ENCODE measurements at regions of chr7 and their contacts with region 1.

Region 1: DNA sequence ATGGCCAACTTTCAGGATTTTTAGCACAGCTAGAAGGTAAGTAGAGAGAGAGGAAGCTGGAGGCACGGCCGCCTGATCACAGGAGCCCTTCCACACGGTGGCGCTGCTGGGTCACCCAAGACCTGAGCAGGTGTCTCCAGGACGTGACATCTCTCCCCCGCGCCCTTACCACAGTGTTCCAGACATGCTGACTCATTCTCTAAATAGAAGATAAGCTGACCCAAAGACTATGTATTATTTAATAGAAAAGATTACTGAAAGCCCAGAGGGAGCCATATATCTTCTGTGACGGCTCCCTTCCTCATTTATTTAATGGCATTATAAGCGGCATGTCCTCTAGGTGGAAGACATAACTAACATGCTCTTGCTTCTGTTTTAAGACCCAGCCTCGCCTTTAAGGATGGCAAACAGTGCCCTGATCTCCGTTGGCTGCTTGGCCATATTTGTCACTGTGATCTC is 26.0 kb upstream of the MALSU1 start:
- DNase-seq: peak; percentile 85 to 98 (median 90)
- ATAC-seq: peak; percentile 96
- H3K4me3 ChIP-seq: no peak overlapping the region
- H3K27ac ChIP-seq: peak overlapping the region; percentile 38; the same call in 1 of the 3 replicates
- H3K4me1 ChIP-seq: peaks cover 0 to 7% of the 10 kb centered on the region in 2 experiments; a peak in 3 of 5 replicates
- H3K27me3 ChIP-seq: peaks cover 0 to 10% of the 10 kb centered on the region in 2 experiments; a peak in 1 of 5 replicates
- CTCF ChIP-seq: peak; percentile 85 to 93 (median 93)
- EP300 ChIP-seq: peak; percentile 68; the same call in 1 of the 2 replicates
- POLR2A ChIP-seq: no peak
- RAD21 ChIP-seq: peak; percentile 79 to 89

Region 2: DNA sequence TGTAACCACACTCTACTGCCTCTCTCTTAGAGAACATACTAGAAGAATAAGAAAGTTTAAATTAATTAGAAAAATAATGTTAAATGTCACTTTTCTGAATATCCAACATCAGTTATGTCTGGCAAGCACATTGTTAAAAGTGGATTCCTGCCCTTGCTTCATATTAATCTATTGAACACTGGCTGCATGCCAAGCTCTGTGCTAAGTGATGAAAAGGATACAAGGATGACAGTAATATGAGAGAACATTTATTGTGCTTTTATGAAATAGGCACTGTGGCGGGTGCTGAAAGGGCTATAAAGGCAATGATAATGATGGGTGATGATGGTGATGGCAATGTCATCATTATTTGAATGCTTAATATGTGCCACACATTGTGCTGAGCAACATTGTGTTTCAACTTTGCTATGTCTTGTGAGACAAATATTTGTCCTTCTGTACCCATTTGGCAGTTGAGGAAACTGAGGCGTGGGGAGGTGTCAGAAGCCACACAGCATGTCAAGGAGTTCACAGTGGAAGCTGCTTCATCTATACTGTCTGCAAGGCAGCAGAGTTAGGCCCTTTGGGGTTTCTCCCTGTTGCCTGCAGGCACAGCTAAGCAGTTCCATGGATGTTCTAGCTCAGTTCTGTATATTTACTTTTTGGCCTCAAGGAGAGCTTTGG is 852.1 kb before region 1 on chr7:
- CTCF ChIA-PET with region 1: no interaction called
- POLR2A ChIA-PET with region 1: no interaction called
- in situ Hi-C with region 1: no loop called
- intact Hi-C with region 1: no loop called
- DNase-seq: no peak
- ATAC-seq: no peak
- H3K4me3 ChIP-seq: no peak overlapping the region
- H3K27ac ChIP-seq: no peak overlapping the region
- H3K4me1 ChIP-seq: no peaks in the 10 kb centered on the region; a peak in 1 of 5 replicates
- H3K27me3 ChIP-seq: no peaks in the 10 kb centered on the region
- CTCF ChIP-seq: no peak
- EP300 ChIP-seq: no peak
- POLR2A ChIP-seq: no peak
- RAD21 ChIP-seq: no peak

Region 3: DNA sequence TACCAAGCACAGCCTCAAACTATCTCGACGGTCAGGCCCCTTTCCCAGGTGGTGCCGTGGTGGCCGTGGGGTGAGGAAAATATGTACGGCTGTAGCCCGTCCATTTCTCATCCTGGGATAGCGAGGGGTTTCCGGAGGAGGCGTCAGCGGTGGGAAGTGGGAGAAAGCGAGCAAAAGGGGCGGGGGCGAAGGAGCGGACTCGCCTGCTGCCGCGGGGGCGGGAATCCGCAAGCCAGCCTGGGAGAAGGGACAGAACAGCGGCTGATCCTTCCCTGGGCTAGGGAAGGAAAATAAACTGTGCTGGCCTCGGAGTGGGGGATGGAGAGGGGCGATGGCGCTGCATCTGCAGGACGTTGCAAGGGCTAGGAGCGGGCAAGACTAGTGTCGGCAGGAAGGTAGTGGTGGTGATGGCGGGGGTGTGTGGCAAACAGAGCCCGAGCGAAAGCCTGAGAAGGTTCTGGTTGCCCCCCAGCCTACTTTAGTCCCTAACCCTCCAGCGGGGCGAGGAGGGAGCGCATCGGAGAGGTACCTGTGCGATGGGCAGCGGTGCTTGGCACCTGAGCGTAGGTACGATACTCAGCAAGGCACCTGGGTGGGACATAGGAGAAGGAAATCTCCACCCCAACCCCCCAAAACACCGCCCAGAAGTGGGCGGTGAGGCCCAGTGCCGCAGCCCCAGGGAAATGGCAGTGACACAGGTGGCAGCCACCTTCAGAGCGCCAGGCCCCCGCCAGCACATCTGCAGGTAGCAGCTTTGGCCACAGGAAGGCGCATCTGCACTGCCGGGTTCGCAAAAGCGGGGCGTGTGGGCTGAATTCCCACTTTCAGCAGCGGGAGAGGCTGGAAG is 723.3 kb before region 1 on chr7:
- CTCF ChIA-PET with region 1: no interaction called
- POLR2A ChIA-PET with region 1: no interaction called
- in situ Hi-C with region 1: loop called (anchors 25 kb)
- intact Hi-C with region 1: no loop called
- DNase-seq: no peak
- ATAC-seq: 0 out of 3 replicates have a peak, but pooled peaks have one; percentile 46
- H3K4me3 ChIP-seq: no peak overlapping the region
- H3K27ac ChIP-seq: no peak overlapping the region
- H3K4me1 ChIP-seq: peaks cover 0 to 8% of the 10 kb centered on the region in 2 experiments; a peak in 1 of 5 replicates
- H3K27me3 ChIP-seq: no peaks in the 10 kb centered on the region
- CTCF ChIP-seq: peak; percentile 19 to 35 (median 24); a peak in 3 of 6 replicates
- EP300 ChIP-seq: no peak
- POLR2A ChIP-seq: no peak
- RAD21 ChIP-seq: no peak

Region 4: GRCh38 chr7:23181684-23182553 is 91.3 kb before region 1 on chr7 and contains the start of gene NUP42:
- CTCF ChIA-PET with region 1: no interaction called
- POLR2A ChIA-PET with region 1: interaction called, 6 read pairs
- in situ Hi-C with region 1: no loop called
- intact Hi-C with region 1: loop called (anchors 1 kb)
- DNase-seq: peak; percentile 92 to 99 (median 94)
- ATAC-seq: peak; percentile 93
- H3K4me3 ChIP-seq: peak within 1 kb of the TSS; percentile 82
- H3K27ac ChIP-seq: peak within 1 kb of the TSS; percentile 83
- H3K4me1 ChIP-seq: peaks cover 8 to 9% of the 10 kb centered on the region in 2 experiments
- H3K27me3 ChIP-seq: no peaks in the 10 kb centered on the region
- CTCF ChIP-seq: no peak
- EP300 ChIP-seq: peak; percentile 20; the same call in 1 of the 2 replicates
- POLR2A ChIP-seq: peak; percentile 96
- RAD21 ChIP-seq: no peak
- polyA plus RNA-seq, gene NUP42: 86.0 to 86.4 TPM

Region 5: GRCh38 chr7:23357190-23358093 is 84.3 kb after region 1 on chr7:
- CTCF ChIA-PET with region 1: no interaction called
- POLR2A ChIA-PET with region 1: no interaction called
- in situ Hi-C with region 1: no loop called
- intact Hi-C with region 1: loop called (anchors 2 kb)
- DNase-seq: peak; percentile 41 to 53 (median 51)
- ATAC-seq: peak; percentile 87
- H3K4me3 ChIP-seq: no peak overlapping the region
- H3K27ac ChIP-seq: peak overlapping the region; percentile 42; the same call in 1 of the 3 replicates
- H3K4me1 ChIP-seq: peaks cover 0 to 8% of the 10 kb centered on the region in 2 experiments; a peak in 2 of 5 replicates
- H3K27me3 ChIP-seq: no peaks in the 10 kb centered on the region
- CTCF ChIP-seq: peak; percentile 35 to 69 (median 43); a peak in 4 of 6 replicates
- EP300 ChIP-seq: no peak
- POLR2A ChIP-seq: no peak
- RAD21 ChIP-seq: peak; percentile 55 to 74

Region 6: GRCh38 chr7:23454881-23455506 is 181.8 kb after region 1 on chr7:
- CTCF ChIA-PET with region 1: no interaction called
- POLR2A ChIA-PET with region 1: no interaction called
- in situ Hi-C with region 1: no loop called
- intact Hi-C with region 1: no loop called
- DNase-seq: no peak
- ATAC-seq: peak; percentile 39
- H3K4me3 ChIP-seq: no peak overlapping the region
- H3K27ac ChIP-seq: no peak overlapping the region
- H3K4me1 ChIP-seq: peaks cover 0 to 2% of the 10 kb centered on the region in 2 experiments; a peak in 1 of 5 replicates
- H3K27me3 ChIP-seq: no peaks in the 10 kb centered on the region
- CTCF ChIP-seq: no peak
- EP300 ChIP-seq: no peak
- POLR2A ChIP-seq: peak; percentile 42; the same call in 1 of the 2 replicates
- RAD21 ChIP-seq: no peak

Region 7: GRCh38 chr7:23546897-23547572 is 273.9 kb after region 1 on chr7:
- CTCF ChIA-PET with region 1: interaction called, 16 read pairs
- POLR2A ChIA-PET with region 1: interaction called, 3 read pairs
- in situ Hi-C with region 1: loop called (anchors 5 kb)
- intact Hi-C with region 1: loop called (anchors 1 kb)
- DNase-seq: peak; percentile 81 to 93 (median 82)
- ATAC-seq: peak; percentile 87
- H3K4me3 ChIP-seq: no peak overlapping the region
- H3K27ac ChIP-seq: no peak overlapping the region
- H3K4me1 ChIP-seq: peaks cover 0 to 6% of the 10 kb centered on the region in 2 experiments; a peak in 2 of 5 replicates
- H3K27me3 ChIP-seq: no peaks in the 10 kb centered on the region; a peak in 1 of 5 replicates
- CTCF ChIP-seq: peak; percentile 94 to 99 (median 98)
- EP300 ChIP-seq: no peak
- POLR2A ChIP-seq: no peak
- RAD21 ChIP-seq: peak; percentile 94

Measured in K562 (cell line).